HepG2 (cell line): ENCODE measurements at regions of chr14 and their contacts with region 1.

Region 1: DNA sequence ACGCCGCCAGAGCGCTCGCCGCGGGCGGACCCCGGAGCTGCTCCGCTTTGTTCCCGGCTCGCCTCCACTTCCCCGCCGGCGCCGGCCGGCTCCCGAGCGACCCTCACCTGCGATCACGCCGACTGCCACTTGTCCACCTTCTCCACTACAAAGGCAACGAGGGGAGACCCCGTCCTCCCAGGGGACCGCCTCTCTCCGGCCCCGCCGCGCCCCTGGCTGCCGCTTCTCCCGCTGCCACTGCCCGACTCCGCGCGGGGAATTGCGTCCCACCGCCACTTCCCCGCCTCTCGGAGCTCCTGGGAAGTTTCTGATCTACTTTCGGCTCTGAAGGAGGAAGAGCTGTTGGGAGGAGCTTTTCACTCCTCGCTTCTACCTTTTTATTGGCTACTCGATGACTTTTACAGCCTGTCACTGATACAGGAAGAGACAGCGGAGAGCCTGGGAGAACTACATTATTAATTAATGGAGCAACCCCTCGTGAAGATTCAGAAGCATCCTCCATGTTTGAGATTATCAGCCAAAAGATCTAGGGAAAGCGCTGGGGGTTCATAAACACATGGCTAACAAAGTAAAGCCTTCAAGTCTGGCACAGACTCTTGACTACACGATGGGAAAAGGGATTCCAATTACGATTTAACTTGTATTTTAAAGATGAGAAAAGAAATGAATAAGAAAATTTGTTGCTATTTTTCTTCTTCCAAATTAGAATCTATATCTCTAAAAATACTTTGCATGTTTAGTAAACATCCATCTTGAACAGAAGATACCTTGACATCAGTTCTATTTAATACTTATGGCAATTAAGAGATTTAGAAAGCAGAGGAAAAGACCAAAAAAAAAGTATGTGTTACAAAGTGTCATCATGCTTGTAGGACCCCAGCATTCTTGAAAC is at the start of gene BAZ1A:
- DNase-seq: peak; percentile 93
- ATAC-seq: peak; percentile 46
- H3K4me3 ChIP-seq: peak within 1 kb of the TSS; percentile 82 to 89 (median 87)
- H3K27ac ChIP-seq: peak within 1 kb of the TSS; percentile 85
- H3K4me1 ChIP-seq: peaks cover 34% of the 10 kb centered on the region
- H3K27me3 ChIP-seq: no peaks in the 10 kb centered on the region; a peak in 1 of 5 replicates
- CTCF ChIP-seq: peak; percentile 37; the same call in 1 of the 2 replicates
- EP300 ChIP-seq: no peak
- POLR2A ChIP-seq: peak in 1 of 2 experiments; percentile 93; a peak in 2 of 4 replicates
- RAD21 ChIP-seq: no peak; the same call in none of the 2 replicates
- total RNA-seq, gene BAZ1A: 56.8 and 68.3 TPM in 2 replicates

Region 2: DNA sequence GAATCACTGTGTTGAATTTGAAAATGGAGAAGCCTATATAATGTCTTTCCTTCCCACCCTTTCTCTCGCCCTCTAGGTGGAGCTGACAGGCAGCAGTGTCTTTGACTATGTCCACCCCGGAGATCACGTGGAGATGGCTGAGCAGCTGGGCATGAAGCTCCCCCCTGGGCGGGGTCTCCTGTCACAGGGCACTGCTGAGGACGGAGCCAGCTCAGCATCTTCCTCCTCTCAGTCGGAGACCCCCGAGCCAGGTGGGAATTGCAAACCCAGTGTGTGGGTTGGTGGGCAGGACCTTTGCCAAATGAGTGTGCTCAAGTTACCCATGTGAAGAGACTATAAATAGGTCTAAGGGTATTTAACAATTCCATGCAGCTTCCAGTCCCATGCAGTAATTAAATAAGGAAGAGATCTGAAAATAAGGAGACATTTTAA is 1199.1 kb before region 1 on chr14:
- CTCF ChIA-PET with region 1: no interaction called
- POLR2A ChIA-PET with region 1: no interaction called
- in situ Hi-C with region 1: no loop called
- intact Hi-C with region 1: no loop called
- DNase-seq: peak; percentile 60
- ATAC-seq: peak; percentile 99
- H3K4me3 ChIP-seq: no peak overlapping the region
- H3K27ac ChIP-seq: no peak overlapping the region
- H3K4me1 ChIP-seq: no peaks in the 10 kb centered on the region
- H3K27me3 ChIP-seq: no peaks in the 10 kb centered on the region
- CTCF ChIP-seq: peak; percentile 66
- EP300 ChIP-seq: no peak
- POLR2A ChIP-seq: no peak
- RAD21 ChIP-seq: no peak

Region 3: GRCh38 chr14:34843011-34843554 is 32.2 kb before region 1 on chr14:
- CTCF ChIA-PET with region 1: no interaction called
- POLR2A ChIA-PET with region 1: interaction called, 4 read pairs
- in situ Hi-C with region 1: no loop called
- intact Hi-C with region 1: loop called (anchors 2 kb)
- DNase-seq: peak; percentile 23
- ATAC-seq: peak; percentile 75
- H3K4me3 ChIP-seq: no peak overlapping the region
- H3K27ac ChIP-seq: peak overlapping the region; percentile 48
- H3K4me1 ChIP-seq: peaks cover 33% of the 10 kb centered on the region
- H3K27me3 ChIP-seq: no peaks in the 10 kb centered on the region
- CTCF ChIP-seq: no peak
- EP300 ChIP-seq: peak in 1 of 2 experiments; percentile 31; a peak in 1 of 4 replicates
- POLR2A ChIP-seq: no peak
- RAD21 ChIP-seq: no peak

Region 4: DNA sequence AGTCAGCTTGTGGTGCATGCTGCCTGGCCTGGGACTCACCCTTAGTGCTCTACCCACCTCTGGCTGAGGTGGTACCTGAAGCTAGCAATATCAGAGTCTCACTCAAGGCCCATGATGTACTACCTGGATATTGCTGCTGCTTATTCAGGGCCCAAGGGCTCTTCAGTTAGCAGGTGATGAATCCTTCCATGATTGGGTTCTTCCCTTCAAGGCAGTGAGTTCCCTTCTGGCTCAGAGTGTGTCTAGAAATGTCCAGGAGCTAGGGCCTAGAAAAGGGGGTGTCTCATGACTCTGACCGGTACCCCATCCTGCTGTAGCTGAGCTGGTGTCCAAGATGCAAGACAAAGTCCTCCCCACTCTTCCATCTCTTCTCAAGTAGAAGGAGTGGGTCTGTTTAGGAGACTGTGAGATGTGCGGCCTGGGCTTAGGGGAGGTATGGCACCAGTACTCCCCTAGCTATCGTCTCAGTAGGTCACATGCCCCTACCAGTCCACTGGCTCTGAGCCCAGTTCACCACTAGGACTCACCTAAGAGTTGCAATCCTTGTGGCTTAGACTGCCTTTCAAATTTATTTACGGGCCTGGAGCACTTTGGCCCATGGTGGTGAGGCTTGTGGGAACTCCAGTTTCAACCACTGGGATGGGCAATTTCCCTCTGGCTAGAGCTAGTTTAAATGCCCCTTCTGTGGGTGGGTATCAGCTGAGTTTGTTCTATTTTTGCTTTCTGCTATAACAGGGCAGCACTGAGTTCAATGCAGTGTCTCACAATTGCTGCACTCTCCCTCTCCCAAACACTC is 259.2 kb after region 1 on chr14:
- CTCF ChIA-PET with region 1: no interaction called
- POLR2A ChIA-PET with region 1: no interaction called
- in situ Hi-C with region 1: no loop called
- intact Hi-C with region 1: no loop called
- DNase-seq: no peak
- ATAC-seq: peak; percentile 33
- H3K4me3 ChIP-seq: no peak overlapping the region
- H3K27ac ChIP-seq: no peak overlapping the region
- H3K4me1 ChIP-seq: no peaks in the 10 kb centered on the region
- H3K27me3 ChIP-seq: no peaks in the 10 kb centered on the region
- CTCF ChIP-seq: no peak
- EP300 ChIP-seq: no peak
- POLR2A ChIP-seq: no peak
- RAD21 ChIP-seq: no peak